GM12878 (cell line): ENCODE measurements at regions of chr3 and their contacts with region 1.

Region 1: GRCh38 chr3:179322286-179323196 is at the start of gene ZNF639:
- DNase-seq: no peak
- ATAC-seq: peak; percentile 84
- H3K4me3 ChIP-seq: peak within 1 kb of the TSS; percentile 78
- H3K27ac ChIP-seq: peak within 1 kb of the TSS; percentile 94
- H3K4me1 ChIP-seq: peaks cover 8% of the 10 kb centered on the region
- H3K27me3 ChIP-seq: no peaks in the 10 kb centered on the region
- CTCF ChIP-seq: peak; percentile 71 to 84 (median 82)
- EP300 ChIP-seq: no peak
- POLR2A ChIP-seq: peak; percentile 81
- RAD21 ChIP-seq: peak; percentile 47
- polyA plus RNA-seq, gene ZNF639: 16.3 to 17.7 TPM

Region 2: GRCh38 chr3:178436773-178437172 is 885.8 kb before region 1 on chr3:
- CTCF ChIA-PET with region 1: interaction called, 7 read pairs
- POLR2A ChIA-PET with region 1: no interaction called
- RAD21 ChIA-PET with region 1: interaction called, 8 read pairs
- SMC1A ChIA-PET with region 1: interaction called, 3 read pairs
- in situ Hi-C with region 1: loop called (anchors 10 kb)
- intact Hi-C with region 1: loop called (anchors 5 kb)
- DNase-seq: no peak
- ATAC-seq: peak; percentile 80
- H3K4me3 ChIP-seq: no peak overlapping the region
- H3K27ac ChIP-seq: no peak overlapping the region
- H3K4me1 ChIP-seq: peaks cover 5% of the 10 kb centered on the region
- H3K27me3 ChIP-seq: no peaks in the 10 kb centered on the region
- CTCF ChIP-seq: peak; percentile 28 to 57 (median 51); a peak in 5 of 6 replicates
- EP300 ChIP-seq: no peak
- POLR2A ChIP-seq: no peak
- RAD21 ChIP-seq: peak; percentile 74

Region 3: DNA sequence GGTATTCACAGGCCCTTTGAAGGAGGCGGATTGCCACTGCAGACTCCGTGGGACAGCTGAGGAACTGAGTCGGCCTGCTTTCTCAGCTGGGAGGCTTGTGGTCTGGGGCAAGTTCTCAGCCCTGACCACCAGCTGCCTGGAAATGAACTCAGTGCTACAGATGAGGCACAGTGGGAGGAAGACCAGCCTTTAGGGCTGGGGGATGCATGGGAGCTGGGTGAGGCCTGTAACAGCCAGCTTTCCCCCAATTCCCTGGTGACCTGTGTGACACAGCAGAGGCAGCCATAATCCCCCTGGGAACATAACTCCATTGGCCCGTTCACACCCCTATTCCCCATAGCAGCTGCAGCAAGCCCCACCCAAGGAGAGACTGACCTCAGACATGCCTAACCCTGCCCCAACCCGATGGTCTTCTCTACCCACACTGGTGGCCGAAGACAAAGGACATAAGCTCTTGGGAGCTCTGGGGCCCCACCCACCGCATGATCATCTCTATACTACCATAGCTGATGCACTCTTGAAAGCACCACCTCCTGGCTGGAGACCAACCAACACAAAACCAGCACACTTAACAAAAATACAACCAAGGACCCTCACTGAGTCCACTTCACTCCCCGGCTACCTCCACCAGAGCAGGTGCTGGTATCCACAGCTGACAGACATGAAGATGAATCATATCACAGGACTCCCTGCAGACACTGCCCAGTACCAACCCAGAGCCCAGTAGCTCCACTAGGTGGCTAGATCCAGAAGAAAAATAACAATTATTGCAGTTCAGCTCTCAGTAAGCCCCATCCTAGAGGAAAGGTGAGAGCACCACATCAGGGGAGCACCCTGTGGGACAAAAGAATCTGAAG is 275.8 kb before region 1 on chr3:
- CTCF ChIA-PET with region 1: interaction called, 11 read pairs
- POLR2A ChIA-PET with region 1: interaction called, 3 read pairs
- RAD21 ChIA-PET with region 1: interaction called, 4 read pairs
- SMC1A ChIA-PET with region 1: interaction called, 5 read pairs
- in situ Hi-C with region 1: no loop called
- intact Hi-C with region 1: no loop called
- DNase-seq: peak; percentile 89
- ATAC-seq: peak; percentile 86
- H3K4me3 ChIP-seq: peak overlapping the region; percentile 10; the same call in 1 of the 2 replicates
- H3K27ac ChIP-seq: peak overlapping the region; percentile 84
- H3K4me1 ChIP-seq: peaks cover 22% of the 10 kb centered on the region
- H3K27me3 ChIP-seq: no peaks in the 10 kb centered on the region
- CTCF ChIP-seq: peak; percentile 8 to 30 (median 24); a peak in 1 of 6 replicates
- EP300 ChIP-seq: peak in 1 of 2 experiments; percentile 75; a peak in 2 of 4 replicates
- POLR2A ChIP-seq: peak; percentile 40
- RAD21 ChIP-seq: no peak

Region 4: GRCh38 chr3:179108086-179108485 is 214.5 kb before region 1 on chr3:
- CTCF ChIA-PET with region 1: interaction called, 18 read pairs
- POLR2A ChIA-PET with region 1: no interaction called
- RAD21 ChIA-PET with region 1: interaction called, 6 read pairs
- SMC1A ChIA-PET with region 1: interaction called, 8 read pairs
- in situ Hi-C with region 1: loop called (anchors 10 kb)
- intact Hi-C with region 1: no loop called
- DNase-seq: no peak
- ATAC-seq: no peak
- H3K4me3 ChIP-seq: no peak overlapping the region
- H3K27ac ChIP-seq: no peak overlapping the region
- H3K4me1 ChIP-seq: peaks cover 3% of the 10 kb centered on the region; the same call in 1 of the 2 replicates
- H3K27me3 ChIP-seq: no peaks in the 10 kb centered on the region
- CTCF ChIP-seq: no peak
- EP300 ChIP-seq: no peak
- POLR2A ChIP-seq: no peak
- RAD21 ChIP-seq: no peak

Region 5: GRCh38 chr3:179224584-179224983 is 98.0 kb before region 1 on chr3:
- CTCF ChIA-PET with region 1: no interaction called
- POLR2A ChIA-PET with region 1: no interaction called
- RAD21 ChIA-PET with region 1: no interaction called
- SMC1A ChIA-PET with region 1: no interaction called
- in situ Hi-C with region 1: no loop called
- intact Hi-C with region 1: loop called (anchors 5 kb)
- DNase-seq: no peak
- ATAC-seq: no peak
- H3K4me3 ChIP-seq: no peak overlapping the region
- H3K27ac ChIP-seq: no peak overlapping the region
- H3K4me1 ChIP-seq: no peaks in the 10 kb centered on the region
- H3K27me3 ChIP-seq: no peaks in the 10 kb centered on the region
- CTCF ChIP-seq: no peak
- EP300 ChIP-seq: no peak
- POLR2A ChIP-seq: no peak
- RAD21 ChIP-seq: no peak

Region 6: GRCh38 chr3:179347345-179348194 is 25.0 kb after region 1 on chr3 and contains the start of gene MFN1:
- CTCF ChIA-PET with region 1: interaction called, 62 read pairs
- POLR2A ChIA-PET with region 1: interaction called, 63 read pairs
- RAD21 ChIA-PET with region 1: interaction called, 35 read pairs
- SMC1A ChIA-PET with region 1: interaction called, 20 read pairs
- in situ Hi-C with region 1: no loop called
- intact Hi-C with region 1: loop called (anchors 2 kb)
- DNase-seq: peak; percentile 87
- ATAC-seq: peak; percentile 95
- H3K4me3 ChIP-seq: peak within 1 kb of the TSS; percentile 71
- H3K27ac ChIP-seq: peak within 1 kb of the TSS; percentile 96
- H3K4me1 ChIP-seq: no peaks in the 10 kb centered on the region; the same call in 1 of the 2 replicates
- H3K27me3 ChIP-seq: no peaks in the 10 kb centered on the region
- CTCF ChIP-seq: no peak
- EP300 ChIP-seq: no peak
- POLR2A ChIP-seq: peak; percentile 98
- RAD21 ChIP-seq: no peak
- polyA plus RNA-seq, gene MFN1: 14.4 to 15.9 TPM